Calu3 (cell line): ENCODE measurements at regions of chr11 and their contacts with region 1.

Region 1: DNA sequence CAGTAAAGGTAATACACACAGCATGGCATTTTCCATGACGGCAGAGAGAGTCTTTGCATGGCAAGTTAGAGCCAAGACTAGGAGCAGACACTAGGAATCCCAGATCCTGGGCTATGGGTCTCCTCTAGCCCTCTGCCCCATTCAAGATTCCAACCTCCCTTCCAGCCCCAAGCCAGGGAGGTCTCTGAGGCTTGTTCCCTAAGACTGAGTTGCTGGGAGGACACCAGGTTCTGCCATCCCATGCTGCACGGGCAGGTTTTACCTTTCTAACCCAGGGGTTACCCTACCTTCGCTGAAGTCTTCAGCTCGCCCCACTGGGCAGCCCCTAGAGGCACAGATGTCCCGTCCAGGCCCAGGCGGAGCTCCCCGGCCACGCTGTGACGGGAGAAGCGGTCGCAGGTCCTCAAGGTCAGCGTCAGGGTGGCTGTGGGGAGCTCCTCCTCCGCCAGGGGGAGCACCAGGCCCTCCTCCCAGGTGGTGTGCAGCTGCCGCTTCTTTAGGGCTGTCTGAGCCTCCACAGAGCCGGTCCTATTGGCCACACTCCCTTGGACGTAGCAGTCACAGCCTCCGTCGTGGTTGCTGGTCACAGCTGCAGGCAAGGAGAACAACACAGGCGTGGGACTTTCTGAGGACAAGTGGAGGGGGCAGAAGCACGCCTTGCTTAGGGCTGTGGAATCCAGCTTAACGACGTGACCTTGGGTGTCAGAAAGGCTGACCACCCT is 33.8 kb downstream of the SYT13 start:
- DNase-seq: peak; percentile 68
- H3K4me3 Mint-ChIP-seq: no peak overlapping the region
- H3K27ac Mint-ChIP-seq: no peak overlapping the region
- H3K4me1 Mint-ChIP-seq: no peaks in the 10 kb centered on the region
- H3K27me3 Mint-ChIP-seq: no peaks in the 10 kb centered on the region
- CTCF ChIP-seq: peak; percentile 69

Region 2: GRCh38 chr11:45294499-45294898 is 42.2 kb after region 1 on chr11:
- CTCF ChIA-PET with region 1: interaction called, 15 read pairs
- intact Hi-C with region 1: loop called (anchors 1 kb)
- DNase-seq: no peak
- H3K4me3 Mint-ChIP-seq: no peak overlapping the region
- H3K27ac Mint-ChIP-seq: no peak overlapping the region
- H3K4me1 Mint-ChIP-seq: no peaks in the 10 kb centered on the region
- H3K27me3 Mint-ChIP-seq: peaks cover 38% of the 10 kb centered on the region
- CTCF ChIP-seq: no peak